ENCODE measurements at regions of chr6 and their contacts with region 1.

Region 1: GRCh38 chr6:42043787-42044475 is 6.4 kb upstream of the TAF8 start:
- DNase-seq: peak; percentile 92
- H3K4me3 Mint-ChIP-seq: peak overlapping the region; percentile 91
- H3K27ac Mint-ChIP-seq: peak overlapping the region; percentile 60
- H3K4me1 Mint-ChIP-seq: peaks cover 39% of the 10 kb centered on the region
- H3K27me3 Mint-ChIP-seq: no peaks in the 10 kb centered on the region
- CTCF ChIP-seq: peak; percentile 93

Region 2: GRCh38 chr6:41367700-41368099 is 676.2 kb before region 1 on chr6:
- CTCF ChIA-PET with region 1: no interaction called
- POLR2A ChIA-PET with region 1: no interaction called
- intact Hi-C with region 1: loop called (anchors 5 kb)
- DNase-seq: peak; percentile 62
- H3K4me3 Mint-ChIP-seq: no peak overlapping the region
- H3K27ac Mint-ChIP-seq: no peak overlapping the region
- H3K4me1 Mint-ChIP-seq: no peaks in the 10 kb centered on the region
- H3K27me3 Mint-ChIP-seq: peaks cover 62% of the 10 kb centered on the region
- CTCF ChIP-seq: peak; percentile 74

Region 3: DNA sequence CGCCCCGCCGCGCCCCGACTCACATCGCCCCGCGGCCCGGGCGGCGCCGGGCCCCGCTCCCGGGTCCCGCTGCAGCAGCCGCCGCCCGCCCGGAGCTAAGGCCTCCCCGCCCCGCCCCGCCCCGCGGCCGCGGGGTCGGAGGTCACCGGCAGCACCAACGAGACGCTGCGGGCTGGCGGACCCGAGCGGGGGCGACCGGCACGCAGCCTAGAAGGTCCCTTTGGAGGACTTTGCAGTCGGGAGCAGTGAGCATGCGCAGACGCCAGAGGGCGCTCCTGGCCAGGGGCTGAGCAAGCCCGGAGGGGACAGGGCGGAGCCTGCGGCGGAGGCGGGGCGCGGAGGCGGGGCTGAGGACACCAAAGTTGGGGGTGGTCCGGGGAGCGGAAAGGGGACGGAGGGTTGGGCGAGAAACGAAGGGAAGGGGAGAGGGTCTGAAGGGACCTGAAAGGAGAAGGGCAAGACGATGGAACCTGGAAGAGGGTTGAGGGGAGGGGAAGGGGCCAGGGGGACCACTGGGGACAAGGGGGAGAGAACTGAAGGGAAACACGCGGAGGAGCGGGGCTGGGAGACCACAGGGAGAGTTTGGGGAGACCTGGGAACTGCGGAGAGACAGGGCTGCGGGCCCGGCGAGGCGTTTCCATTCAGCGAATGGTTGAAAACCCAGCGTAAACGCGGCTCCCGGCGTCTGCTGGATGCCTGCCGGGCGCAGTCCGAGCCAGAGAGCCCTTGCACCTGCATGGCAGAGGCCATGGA is 264.0 kb before region 1 on chr6 and contains the start of gene FRS3:
- CTCF ChIA-PET with region 1: interaction called, 29 read pairs
- POLR2A ChIA-PET with region 1: interaction called, 100 read pairs
- intact Hi-C with region 1: loop called (anchors 1 kb)
- DNase-seq: peak; percentile 90
- H3K4me3 Mint-ChIP-seq: peak within 1 kb of the TSS; percentile 90
- H3K27ac Mint-ChIP-seq: no peak within 1 kb of the TSS
- H3K4me1 Mint-ChIP-seq: peaks cover 23% of the 10 kb centered on the region
- H3K27me3 Mint-ChIP-seq: no peaks in the 10 kb centered on the region
- CTCF ChIP-seq: peak; percentile 94
- total RNA-seq, gene FRS3: 3.9 and 5.3 TPM in 2 replicates

Region 4: DNA sequence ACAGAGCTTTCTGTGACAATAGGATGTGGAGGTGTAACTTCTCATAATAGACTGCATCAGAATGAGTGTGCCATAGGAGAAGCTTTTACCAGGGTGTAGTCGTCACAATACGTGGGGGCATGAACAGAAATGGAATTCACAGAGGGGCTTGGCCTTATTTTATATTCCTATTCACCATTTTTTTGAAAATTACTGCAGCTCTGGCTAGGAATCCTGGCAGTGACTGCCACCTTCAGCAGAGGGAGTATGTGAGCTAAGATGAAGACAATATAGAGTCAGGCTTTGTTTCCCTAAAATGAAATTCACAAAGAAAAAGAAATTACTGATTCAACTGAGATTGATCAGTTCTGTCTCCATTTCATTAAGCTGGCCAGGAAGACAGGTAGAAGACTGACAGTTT is 242.6 kb before region 1 on chr6:
- CTCF ChIA-PET with region 1: interaction called, 37 read pairs
- POLR2A ChIA-PET with region 1: interaction called, 18 read pairs
- intact Hi-C with region 1: loop called (anchors 1 kb)
- DNase-seq: peak; percentile 44
- H3K4me3 Mint-ChIP-seq: no peak overlapping the region
- H3K27ac Mint-ChIP-seq: no peak overlapping the region
- H3K4me1 Mint-ChIP-seq: peaks cover 5% of the 10 kb centered on the region
- H3K27me3 Mint-ChIP-seq: no peaks in the 10 kb centered on the region
- CTCF ChIP-seq: peak; percentile 55

Region 5: GRCh38 chr6:41920921-41921711 is 122.8 kb before region 1 on chr6 and contains the starts of genes BYSL and MED20:
- CTCF ChIA-PET with region 1: interaction called, 26 read pairs
- POLR2A ChIA-PET with region 1: interaction called, 121 read pairs
- intact Hi-C with region 1: loop called (anchors 1 kb)
- DNase-seq: peak; percentile 96
- H3K4me3 Mint-ChIP-seq: peak within 1 kb of the TSS; percentile 99
- H3K27ac Mint-ChIP-seq: peak within 1 kb of the TSS; percentile 100
- H3K4me1 Mint-ChIP-seq: peaks cover 41% of the 10 kb centered on the region
- H3K27me3 Mint-ChIP-seq: no peaks in the 10 kb centered on the region
- CTCF ChIP-seq: peak; percentile 96
- total RNA-seq, gene BYSL: 45.0 and 58.0 TPM in 2 replicates
- total RNA-seq, gene MED20: 27.6 and 29.2 TPM in 2 replicates

Region 6: GRCh38 chr6:41941280-41942066 is 102.5 kb before region 1 on chr6 and contains the start of gene CCND3:
- CTCF ChIA-PET with region 1: interaction called, 117 read pairs
- POLR2A ChIA-PET with region 1: interaction called, 136 read pairs
- intact Hi-C with region 1: loop called (anchors 1 kb)
- DNase-seq: peak; percentile 88
- H3K4me3 Mint-ChIP-seq: peak within 1 kb of the TSS; percentile 85
- H3K27ac Mint-ChIP-seq: peak within 1 kb of the TSS; percentile 59
- H3K4me1 Mint-ChIP-seq: peaks cover 25% of the 10 kb centered on the region
- H3K27me3 Mint-ChIP-seq: no peaks in the 10 kb centered on the region
- CTCF ChIP-seq: no peak
- total RNA-seq, gene CCND3: 52.5 and 75.8 TPM in 2 replicates

Region 7: DNA sequence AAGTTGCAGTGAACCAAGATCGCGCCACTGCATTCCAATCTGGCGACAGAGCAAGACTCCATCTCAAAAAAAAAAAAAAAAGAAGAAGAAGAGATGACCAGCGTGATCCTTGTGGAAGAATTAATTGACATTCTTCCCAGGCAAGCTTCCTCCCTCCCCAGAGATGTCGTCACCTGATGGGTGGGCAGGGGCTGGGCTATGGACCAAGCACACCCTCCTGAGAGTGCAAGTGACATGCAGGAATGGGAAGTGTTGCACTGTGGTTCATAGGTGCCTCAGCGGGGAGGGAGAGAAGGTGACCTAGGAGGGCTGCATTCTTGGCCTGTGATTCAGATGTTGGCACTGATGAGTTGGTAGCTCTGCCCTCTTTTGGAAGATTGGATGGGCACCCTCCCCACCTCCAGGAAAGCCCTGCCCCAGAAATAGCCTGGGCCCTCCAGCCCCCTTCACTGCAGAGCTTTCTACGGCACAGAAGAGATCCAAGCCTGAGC is 44.2 kb after region 1 on chr6:
- CTCF ChIA-PET with region 1: no interaction called
- POLR2A ChIA-PET with region 1: no interaction called
- intact Hi-C with region 1: no loop called
- DNase-seq: peak; percentile 65
- H3K4me3 Mint-ChIP-seq: no peak overlapping the region
- H3K27ac Mint-ChIP-seq: peak overlapping the region; percentile 42
- H3K4me1 Mint-ChIP-seq: peaks cover 14% of the 10 kb centered on the region
- H3K27me3 Mint-ChIP-seq: no peaks in the 10 kb centered on the region
- CTCF ChIP-seq: no peak

Region 8: GRCh38 chr6:42224222-42224989 is 180.5 kb after region 1 on chr6:
- CTCF ChIA-PET with region 1: interaction called, 8 read pairs
- POLR2A ChIA-PET with region 1: interaction called, 14 read pairs
- intact Hi-C with region 1: no loop called
- DNase-seq: peak; percentile 93
- H3K4me3 Mint-ChIP-seq: peak overlapping the region; percentile 73
- H3K27ac Mint-ChIP-seq: peak overlapping the region; percentile 92
- H3K4me1 Mint-ChIP-seq: peaks cover 44% of the 10 kb centered on the region
- H3K27me3 Mint-ChIP-seq: no peaks in the 10 kb centered on the region
- CTCF ChIP-seq: no peak

Region 9: DNA sequence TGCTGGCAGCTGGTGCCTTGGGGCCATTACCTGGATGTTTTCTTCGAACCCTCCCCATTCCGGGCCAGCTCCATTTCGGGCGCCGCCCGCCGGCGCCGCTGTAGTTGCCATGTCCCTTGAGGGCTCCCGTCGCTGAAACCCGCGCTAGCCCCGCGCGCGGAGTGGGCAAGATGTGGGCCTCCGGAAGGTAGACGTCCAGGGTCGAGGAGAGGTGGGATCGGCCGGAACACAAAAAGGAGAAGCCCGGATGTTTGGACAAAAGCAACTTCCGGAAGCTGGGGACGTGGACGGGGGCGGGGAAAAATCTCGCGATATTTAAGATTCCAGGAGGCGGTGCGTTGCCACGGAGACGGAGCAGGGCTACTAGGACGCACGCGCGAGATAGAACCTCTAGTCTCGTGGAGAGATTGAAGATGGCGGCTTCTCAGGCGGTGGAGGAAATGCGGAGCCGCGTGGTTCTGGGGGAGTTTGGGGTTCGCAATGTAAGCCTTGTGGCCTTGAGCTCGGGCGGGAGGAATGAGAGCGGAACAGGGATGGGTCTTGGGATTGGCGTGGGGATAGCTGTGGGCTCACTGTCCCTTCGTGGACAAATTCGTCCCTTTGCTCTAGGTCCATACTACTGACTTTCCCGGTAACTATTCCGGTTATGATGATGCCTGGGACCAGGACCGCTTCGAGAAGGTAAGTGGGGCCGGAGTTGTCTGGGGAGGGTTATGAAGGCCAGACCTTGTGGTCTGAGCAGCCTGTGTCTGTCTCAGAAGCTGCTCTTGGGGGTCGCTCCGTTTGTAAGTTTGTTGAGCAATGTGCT is 1473.0 kb after region 1 on chr6 and contains the starts of genes POLR1C and YIPF3:
- CTCF ChIA-PET with region 1: no interaction called
- POLR2A ChIA-PET with region 1: no interaction called
- intact Hi-C with region 1: no loop called
- DNase-seq: peak; percentile 98
- H3K4me3 Mint-ChIP-seq: no peak within 1 kb of the TSS
- H3K27ac Mint-ChIP-seq: no peak within 1 kb of the TSS
- H3K4me1 Mint-ChIP-seq: peaks cover 13% of the 10 kb centered on the region
- H3K27me3 Mint-ChIP-seq: no peaks in the 10 kb centered on the region
- CTCF ChIP-seq: no peak
- total RNA-seq, gene POLR1C: 54.9 and 63.6 TPM in 2 replicates
- total RNA-seq, gene YIPF3: 65.1 and 72.9 TPM in 2 replicates